Calu3 (cell line): ENCODE measurements at regions of chr3 and their contacts with region 1.

Region 1: GRCh38 chr3:14461748-14462324 is 59.4 kb downstream of the SLC6A6 start:
- DNase-seq: peak; percentile 73
- H3K4me3 Mint-ChIP-seq: no peak overlapping the region
- H3K27ac Mint-ChIP-seq: no peak overlapping the region
- H3K4me1 Mint-ChIP-seq: peaks cover 33% of the 10 kb centered on the region
- H3K27me3 Mint-ChIP-seq: no peaks in the 10 kb centered on the region
- CTCF ChIP-seq: peak; percentile 44

Region 2: DNA sequence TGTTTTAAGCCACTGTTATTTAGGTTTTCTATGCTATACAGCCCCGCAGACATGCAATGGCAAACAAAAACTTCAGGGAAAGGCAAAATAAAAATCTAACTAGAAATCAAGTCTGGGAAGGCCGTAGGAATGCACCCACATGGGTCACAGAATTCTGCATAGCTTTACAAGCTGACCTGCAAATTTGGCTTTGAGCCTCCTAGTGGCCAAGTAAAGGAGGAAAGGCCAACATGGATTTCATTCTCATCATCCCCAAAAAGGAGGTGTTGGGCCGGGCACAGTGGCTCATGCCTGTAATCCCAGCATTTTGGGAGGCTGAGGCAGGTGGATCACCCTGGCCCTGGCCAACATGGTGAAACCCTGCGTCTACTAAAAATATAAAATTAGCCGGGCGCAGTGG is 788.6 kb before region 1 on chr3:
- CTCF ChIA-PET with region 1: no interaction called
- intact Hi-C with region 1: no loop called
- DNase-seq: no peak
- H3K4me3 Mint-ChIP-seq: no peak overlapping the region
- H3K27ac Mint-ChIP-seq: no peak overlapping the region
- H3K4me1 Mint-ChIP-seq: no peaks in the 10 kb centered on the region
- H3K27me3 Mint-ChIP-seq: peaks cover 74% of the 10 kb centered on the region
- CTCF ChIP-seq: peak; percentile 33

Region 3: DNA sequence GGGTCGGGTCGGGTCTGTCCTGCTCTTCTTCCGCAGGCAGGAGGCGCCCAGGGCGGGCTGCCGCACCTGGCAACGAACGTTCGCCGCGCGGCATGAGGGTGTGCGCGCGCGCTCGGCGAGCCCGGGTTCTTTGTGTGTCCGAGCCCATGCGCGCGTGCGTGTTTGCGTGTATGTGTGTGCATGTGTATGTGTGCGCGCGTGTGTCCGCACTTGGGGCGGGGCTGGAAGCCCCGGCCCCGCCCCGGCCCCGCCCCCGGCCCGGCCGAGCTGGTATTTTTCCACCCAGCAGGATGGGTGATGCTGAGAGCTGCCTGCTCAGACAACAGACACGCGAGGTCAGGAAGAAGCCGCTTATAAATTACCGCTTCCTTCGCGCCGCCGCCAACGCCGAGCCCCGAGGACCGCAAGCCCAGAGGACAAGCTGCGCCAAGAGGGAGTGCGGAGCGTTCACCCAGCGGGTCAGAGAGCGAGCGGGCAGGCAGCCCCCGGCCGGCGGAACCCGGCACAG is 59.5 kb before region 1 on chr3 and contains the start of gene SLC6A6:
- CTCF ChIA-PET with region 1: interaction called, 13 read pairs
- intact Hi-C with region 1: loop called (anchors 2 kb)
- DNase-seq: peak; percentile 94
- H3K4me3 Mint-ChIP-seq: peak within 1 kb of the TSS; percentile 97
- H3K27ac Mint-ChIP-seq: peak within 1 kb of the TSS; percentile 74
- H3K4me1 Mint-ChIP-seq: peaks cover 18% of the 10 kb centered on the region
- H3K27me3 Mint-ChIP-seq: no peaks in the 10 kb centered on the region
- CTCF ChIP-seq: peak; percentile 25
- total RNA-seq, gene SLC6A6: 46.3 and 48.3 TPM in 2 replicates

Region 4: GRCh38 chr3:14426063-14426620 is 35.7 kb before region 1 on chr3:
- CTCF ChIA-PET with region 1: interaction called, 10 read pairs
- intact Hi-C with region 1: loop called (anchors 2 kb)
- DNase-seq: peak; percentile 58
- H3K4me3 Mint-ChIP-seq: peak overlapping the region; percentile 49
- H3K27ac Mint-ChIP-seq: peak overlapping the region; percentile 78
- H3K4me1 Mint-ChIP-seq: peaks cover 67% of the 10 kb centered on the region
- H3K27me3 Mint-ChIP-seq: no peaks in the 10 kb centered on the region
- CTCF ChIP-seq: no peak

Region 5: GRCh38 chr3:14508961-14509795 is 47.3 kb after region 1 on chr3:
- CTCF ChIA-PET with region 1: no interaction called
- intact Hi-C with region 1: no loop called
- DNase-seq: peak; percentile 82
- H3K4me3 Mint-ChIP-seq: no peak overlapping the region
- H3K27ac Mint-ChIP-seq: no peak overlapping the region
- H3K4me1 Mint-ChIP-seq: no peaks in the 10 kb centered on the region
- H3K27me3 Mint-ChIP-seq: peaks cover 31% of the 10 kb centered on the region
- CTCF ChIP-seq: peak; percentile 92

Region 6: DNA sequence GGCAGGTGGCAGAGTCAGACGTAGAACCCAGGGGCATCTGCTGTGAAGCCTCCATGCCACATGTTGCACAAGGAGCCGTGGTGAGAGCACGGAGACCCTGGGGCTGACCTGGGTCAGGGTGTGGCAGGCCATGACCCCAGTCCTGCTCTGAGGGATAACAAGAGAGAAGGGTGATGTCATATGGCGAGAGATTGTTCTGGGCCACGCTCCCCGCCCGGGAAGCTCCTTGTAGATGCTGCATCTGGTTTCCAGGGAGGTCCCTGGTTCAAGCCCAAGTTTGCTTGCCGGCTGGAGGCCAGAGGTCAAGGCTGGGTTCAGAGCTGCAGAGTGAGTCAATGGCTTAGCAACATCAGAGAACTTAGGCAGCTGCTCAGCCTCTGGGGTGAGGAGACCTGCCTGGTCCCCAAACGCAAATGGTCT is 374.2 kb after region 1 on chr3:
- CTCF ChIA-PET with region 1: no interaction called
- intact Hi-C with region 1: no loop called
- DNase-seq: no peak
- H3K4me3 Mint-ChIP-seq: no peak overlapping the region
- H3K27ac Mint-ChIP-seq: no peak overlapping the region
- H3K4me1 Mint-ChIP-seq: no peaks in the 10 kb centered on the region
- H3K27me3 Mint-ChIP-seq: peaks cover 95% of the 10 kb centered on the region
- CTCF ChIP-seq: no peak